Activated T-helper 2 cell treated with anti-CD3 and anti-CD28 coated beads, Interferon-gamma antibody, Interleukin-2, Interleukin-4, amounts not matched to agents 10 μg/mL and 5 μg/mL and 100 μg/mL, durations not matched to agents 14 hours and 24 hours and 36 hours (primary cell): ENCODE measurements at regions of chr1 and their contacts with region 1.

Region 1: DNA sequence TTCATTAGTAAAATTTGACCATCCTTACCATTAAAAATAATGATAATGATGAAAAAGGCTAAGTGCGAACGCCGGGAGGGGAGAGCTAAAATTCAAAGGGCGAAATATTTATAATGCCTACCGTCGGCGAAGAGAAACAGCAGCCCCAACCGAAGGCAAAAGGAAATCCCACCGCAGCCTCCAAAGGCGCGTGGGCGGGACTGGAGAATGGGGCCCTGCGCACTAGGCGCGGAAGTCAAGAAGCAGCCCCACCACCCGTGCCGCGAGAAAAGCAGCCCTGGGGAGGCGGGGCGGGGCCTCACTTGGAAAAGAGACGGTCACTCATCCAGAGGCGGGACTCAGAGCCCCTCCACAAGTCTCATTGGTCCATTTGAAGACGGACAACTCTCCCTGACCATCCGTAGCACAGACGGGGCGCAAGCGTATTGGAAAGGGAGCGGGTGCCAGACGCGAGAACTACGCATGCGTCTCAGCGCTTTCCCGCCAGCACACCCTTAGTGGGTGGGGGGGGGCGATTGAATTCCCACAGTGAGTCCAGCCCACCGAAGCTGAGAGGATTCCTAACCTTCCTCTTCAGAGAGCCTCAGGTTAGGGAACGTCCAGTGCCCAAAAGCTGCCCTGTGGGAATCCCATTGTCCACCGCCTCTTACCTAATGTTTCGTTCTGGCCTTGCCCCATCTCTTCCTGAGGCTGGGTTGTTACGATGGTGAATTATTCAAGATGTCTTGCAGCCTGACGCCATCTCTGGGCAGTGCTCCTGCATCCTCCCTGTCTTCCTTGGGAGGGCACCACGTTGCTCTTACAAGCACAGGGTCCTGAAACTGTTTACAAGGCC is 19.0 kb downstream of the MTX1 start:
- DNase-seq: peak; percentile 99
- H3K4me3 Mint-ChIP-seq: peak overlapping the region; percentile 95
- H3K27ac Mint-ChIP-seq: peak overlapping the region; percentile 94
- H3K4me1 Mint-ChIP-seq: peaks cover 26% of the 10 kb centered on the region
- H3K27me3 Mint-ChIP-seq: no peaks in the 10 kb centered on the region

Region 2: DNA sequence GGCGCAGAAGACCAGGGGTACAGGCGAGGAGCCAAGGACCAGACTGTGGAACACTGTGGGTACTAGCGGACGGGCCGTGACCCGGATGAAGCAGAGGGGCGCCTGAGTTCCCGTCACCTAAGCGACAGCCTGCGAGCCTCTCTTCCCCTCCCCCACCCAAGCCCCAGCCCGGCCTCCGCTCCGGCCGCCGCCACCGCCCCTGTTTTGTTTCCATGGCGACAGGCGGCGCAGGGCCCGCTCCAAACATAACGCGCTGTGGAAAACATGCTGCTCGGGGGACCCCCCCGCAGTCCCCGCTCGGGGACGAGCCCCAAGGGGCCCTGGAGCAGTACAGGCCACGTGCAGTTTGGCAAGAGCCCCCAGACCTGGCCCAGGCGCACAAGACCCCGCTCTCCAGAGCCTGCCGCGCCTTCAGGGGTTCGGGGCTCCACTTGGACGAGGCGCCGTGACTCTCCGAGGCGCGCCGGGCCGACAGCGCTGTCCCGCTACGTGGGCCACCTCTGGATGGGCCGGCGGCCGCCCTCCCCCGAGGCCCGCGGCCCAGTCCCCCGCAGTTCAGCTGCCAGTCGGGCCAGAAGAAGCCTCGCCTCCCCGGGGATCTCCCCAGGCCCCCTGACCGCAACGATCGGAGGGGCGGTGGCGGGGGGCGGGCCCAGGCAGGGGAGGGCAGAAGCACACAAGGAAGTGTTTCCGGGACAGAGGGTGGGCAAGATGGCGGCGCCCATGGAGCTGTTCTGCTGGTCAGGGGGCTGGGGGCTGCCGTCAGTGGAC is 18.8 kb before region 1 on chr1 and contains the start of gene MTX1:
- intact Hi-C with region 1: loop called (anchors 1 kb)
- DNase-seq: peak; percentile 84
- H3K4me3 Mint-ChIP-seq: peak within 1 kb of the TSS; percentile 92
- H3K27ac Mint-ChIP-seq: peak within 1 kb of the TSS; percentile 87
- H3K4me1 Mint-ChIP-seq: peaks cover 24% of the 10 kb centered on the region
- H3K27me3 Mint-ChIP-seq: no peaks in the 10 kb centered on the region
- total RNA-seq, gene MTX1: 58.6 and 64.0 TPM in 2 replicates